GM18951 (cell line): ENCODE measurements at regions of chr7 and their contacts with region 1.

Region 1: DNA sequence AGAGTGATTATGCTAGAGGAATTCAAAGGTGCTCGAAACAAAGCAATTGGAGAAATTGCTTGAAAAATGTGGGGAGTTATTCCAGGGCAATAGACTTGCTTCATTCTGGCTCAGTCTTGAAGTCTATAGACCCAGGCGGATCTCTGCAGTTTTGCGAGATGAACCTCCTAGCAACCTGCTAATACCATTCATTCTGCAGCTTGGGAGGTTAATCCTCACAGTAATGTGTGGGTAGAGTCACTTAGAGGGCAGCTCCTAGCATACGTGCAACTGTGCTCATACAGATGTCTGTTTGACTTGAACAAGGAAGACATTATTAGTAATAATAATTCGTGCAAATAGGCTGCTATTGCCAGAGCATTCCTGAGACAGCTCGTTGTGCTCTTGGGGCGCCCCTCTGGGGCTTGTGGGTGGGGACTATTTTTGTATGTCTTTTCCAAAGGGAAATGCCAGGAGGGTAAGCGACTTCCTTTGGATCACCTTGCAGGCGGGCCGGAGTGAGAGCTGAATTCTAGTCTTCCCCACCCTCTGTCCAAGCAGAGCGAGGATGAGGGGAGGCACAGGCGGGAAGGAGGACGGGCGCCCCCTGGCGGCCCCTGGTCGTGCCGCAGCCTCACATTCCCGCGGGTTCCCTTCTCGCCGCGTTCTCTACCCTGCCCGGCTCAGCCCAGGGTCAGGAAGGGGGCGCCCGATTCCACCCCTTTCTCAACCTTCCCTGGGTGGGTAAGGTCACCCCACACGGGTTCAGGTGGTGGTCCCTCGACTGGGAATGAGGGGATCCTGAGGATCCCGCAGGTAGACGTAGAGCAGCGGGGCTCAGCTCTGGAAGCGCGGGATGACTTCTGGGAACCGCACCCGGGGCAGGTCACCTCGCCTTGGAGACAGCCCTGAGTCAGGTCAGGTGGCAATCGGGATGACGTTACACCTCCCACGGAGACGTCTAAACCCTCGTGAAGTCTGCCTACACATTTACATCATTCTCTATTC is 241.5 kb downstream of the PHTF2 start:
- POLR2A ChIP-seq: no peak

Region 2: GRCh38 chr7:77667459-77668086 is 372.5 kb before region 1 on chr7:
- in situ Hi-C with region 1: loop called (anchors 10 kb)
- POLR2A ChIP-seq: no peak

Region 3: GRCh38 chr7:77940647-77941046 is 99.4 kb before region 1 on chr7:
- in situ Hi-C with region 1: loop called (anchors 10 kb)
- POLR2A ChIP-seq: no peak